Activated CD4-positive, alpha-beta T cell treated with anti-CD3 and anti-CD28 coated beads, Interleukin-2, amount 10 ng/mL, durations not matched to agents 24 days and 14 days (primary cell): ENCODE measurements at regions of chr1 and their contacts with region 1.

Region 1: GRCh38 chr1:111030590-111030989 is 66.9 kb upstream of the LRIF1 start:
- DNase-seq: peak; percentile 89
- H3K4me3 Mint-ChIP-seq: no peak overlapping the region
- H3K27ac Mint-ChIP-seq: no peak overlapping the region
- H3K4me1 Mint-ChIP-seq: no peaks in the 10 kb centered on the region
- H3K27me3 Mint-ChIP-seq: peaks cover 41% of the 10 kb centered on the region

Region 2: DNA sequence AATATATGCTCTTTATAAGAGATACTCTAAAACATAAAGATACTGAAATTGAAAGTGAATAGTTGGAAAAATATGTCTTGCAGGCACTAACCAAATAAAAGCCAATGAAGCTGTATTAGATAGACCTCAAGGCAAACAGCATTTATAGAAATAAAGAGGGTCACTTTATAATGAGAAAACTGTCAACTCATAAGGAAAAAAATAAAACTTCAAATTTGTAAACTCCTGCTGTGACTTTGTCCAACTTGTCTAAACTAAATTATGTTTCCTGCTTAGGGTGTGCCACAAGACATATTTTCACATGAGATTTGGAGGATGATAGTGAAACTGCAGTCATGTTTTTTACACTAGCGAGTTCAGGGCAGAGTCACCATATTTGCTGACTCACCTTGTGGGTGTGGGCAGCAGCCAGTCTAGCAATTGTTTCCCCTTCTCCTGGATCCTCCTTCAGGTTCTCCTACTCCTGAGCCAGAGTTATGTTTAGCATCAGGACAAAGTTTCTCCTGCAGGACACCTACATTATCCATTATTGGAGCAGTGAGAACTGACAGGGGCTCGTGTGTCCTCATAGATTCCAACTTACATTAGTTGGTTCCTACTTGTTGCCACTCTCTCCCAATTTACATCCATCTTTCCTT is 113.8 kb before region 1 on chr1:
- intact Hi-C with region 1: no loop called
- DNase-seq: peak; percentile 84
- H3K4me3 Mint-ChIP-seq: peak overlapping the region; percentile 71
- H3K27ac Mint-ChIP-seq: peak overlapping the region; percentile 71
- H3K4me1 Mint-ChIP-seq: peaks cover 17% of the 10 kb centered on the region
- H3K27me3 Mint-ChIP-seq: peaks cover 3% of the 10 kb centered on the region

Region 3: DNA sequence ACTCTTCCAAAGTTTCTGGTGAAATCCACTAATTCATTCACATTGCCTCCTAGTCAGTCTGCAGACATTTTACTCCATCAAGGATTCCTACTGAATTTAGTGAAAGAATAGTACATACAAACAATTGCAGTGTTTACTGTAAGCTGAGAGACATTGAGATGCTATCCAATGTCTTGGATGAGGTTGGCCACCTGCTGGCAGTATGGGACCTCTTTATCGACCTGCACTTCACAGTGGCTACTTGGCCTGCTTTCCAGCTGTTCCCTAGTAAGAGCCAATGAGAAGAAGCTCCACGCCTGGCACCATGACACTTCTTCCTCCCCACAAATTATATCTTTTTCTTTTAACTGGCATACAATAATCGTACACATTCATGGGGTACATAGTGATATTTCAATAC is 15.4 kb before region 1 on chr1:
- intact Hi-C with region 1: no loop called
- DNase-seq: no peak
- H3K4me3 Mint-ChIP-seq: no peak overlapping the region
- H3K27ac Mint-ChIP-seq: no peak overlapping the region
- H3K4me1 Mint-ChIP-seq: no peaks in the 10 kb centered on the region
- H3K27me3 Mint-ChIP-seq: peaks cover 25% of the 10 kb centered on the region

Region 4: DNA sequence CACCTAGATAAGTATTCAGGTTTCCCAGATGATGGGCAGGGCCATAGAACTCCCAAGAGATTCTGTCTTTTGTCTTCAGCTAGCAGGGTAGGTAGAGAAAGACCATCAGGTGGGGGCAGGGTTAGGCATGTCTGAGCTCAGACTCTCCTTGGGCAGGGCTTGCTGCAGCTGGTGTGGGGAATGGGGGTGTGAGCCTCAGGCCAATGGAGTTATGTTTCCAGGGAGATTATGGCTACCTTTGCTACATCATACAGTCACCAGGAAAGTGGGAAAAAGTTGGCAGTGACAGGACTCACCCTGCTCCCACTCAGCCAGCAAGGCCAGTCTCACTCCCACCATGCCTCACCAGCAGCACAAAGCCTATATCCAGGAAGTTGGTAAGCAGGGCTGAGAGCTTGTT is 31.5 kb after region 1 on chr1:
- intact Hi-C with region 1: no loop called
- DNase-seq: no peak
- H3K4me3 Mint-ChIP-seq: no peak overlapping the region
- H3K27ac Mint-ChIP-seq: no peak overlapping the region
- H3K4me1 Mint-ChIP-seq: no peaks in the 10 kb centered on the region
- H3K27me3 Mint-ChIP-seq: peaks cover 11% of the 10 kb centered on the region

Region 5: DNA sequence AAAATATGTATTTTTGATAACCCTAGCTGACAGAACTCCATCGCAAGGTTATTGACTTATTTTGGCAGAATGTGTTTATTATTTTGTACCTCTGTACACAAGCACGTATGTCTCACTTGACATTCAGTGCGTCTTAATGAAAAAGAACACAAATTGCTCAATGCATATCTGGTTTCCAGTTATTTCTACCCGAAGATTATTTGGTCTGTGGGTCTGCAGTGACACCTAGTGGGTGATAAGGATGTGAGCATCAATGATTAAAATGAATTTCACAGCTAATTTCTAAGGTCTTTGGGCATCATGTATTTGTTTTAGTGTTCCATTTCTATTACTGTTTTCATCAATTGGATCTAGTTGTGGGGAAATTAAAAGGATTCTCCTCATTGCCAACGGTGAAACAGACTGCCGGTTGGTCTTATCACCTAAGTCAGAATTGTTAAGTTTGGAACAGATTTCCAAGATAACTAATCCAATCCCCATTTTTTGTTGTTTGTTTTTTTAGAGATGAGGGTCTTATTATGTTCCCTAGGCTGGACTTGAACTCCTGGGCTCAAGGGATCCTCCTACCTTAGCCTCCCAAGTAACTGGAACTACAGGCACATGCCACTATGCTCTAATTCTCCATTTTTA is 739.0 kb after region 1 on chr1:
- intact Hi-C with region 1: loop called (anchors 5 kb)
- DNase-seq: peak; percentile 84
- H3K4me3 Mint-ChIP-seq: no peak overlapping the region
- H3K27ac Mint-ChIP-seq: no peak overlapping the region
- H3K4me1 Mint-ChIP-seq: peaks cover 1% of the 10 kb centered on the region
- H3K27me3 Mint-ChIP-seq: no peaks in the 10 kb centered on the region